ENCODE measurements at regions of chr16 and their contacts with region 1.

Region 1: DNA sequence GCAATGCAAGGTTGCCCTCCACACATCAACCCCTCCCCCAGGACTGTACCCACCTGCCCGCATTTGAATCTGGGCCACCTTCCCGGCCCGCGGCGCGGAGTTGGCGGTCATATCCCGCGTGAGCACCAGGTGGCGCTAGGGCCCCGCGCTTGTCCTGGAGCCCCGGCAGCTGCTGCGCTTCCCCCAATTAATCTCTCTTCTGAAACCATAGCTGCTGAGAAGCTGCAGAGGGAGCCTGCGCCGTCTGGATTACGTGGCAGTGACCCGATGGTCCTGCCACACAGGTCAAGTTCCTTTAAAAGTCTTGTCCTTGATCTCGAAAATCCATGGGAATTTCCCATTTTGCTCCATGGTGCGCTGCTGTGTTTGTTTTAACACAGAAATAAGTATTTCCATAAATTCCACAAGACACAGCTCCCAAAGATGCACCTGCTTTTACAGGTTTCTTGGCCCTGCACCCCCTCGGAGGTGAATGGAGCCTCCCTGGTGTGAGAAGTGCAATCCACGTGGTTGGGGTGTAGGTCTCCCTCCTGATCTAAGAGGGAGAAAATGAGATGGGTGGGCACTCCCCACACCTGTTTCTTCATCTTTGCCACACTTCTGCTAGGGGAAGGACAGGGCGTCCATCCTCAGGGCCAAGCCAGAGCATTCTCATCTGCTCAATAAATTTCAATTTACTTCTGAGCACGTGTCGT is 22.1 kb downstream of the COX4I1 start:
- DNase-seq: peak; percentile 79
- ATAC-seq: peak; percentile 83
- H3K4me3 Mint-ChIP-seq: no peak overlapping the region
- H3K27ac Mint-ChIP-seq: no peak overlapping the region
- H3K4me1 Mint-ChIP-seq: no peaks in the 10 kb centered on the region
- H3K27me3 Mint-ChIP-seq: peaks cover 27% of the 10 kb centered on the region

Region 2: GRCh38 chr16:85891033-85891772 is 69.6 kb after region 1 on chr16:
- CTCF ChIA-PET with region 1: interaction called, 11 read pairs
- DNase-seq: no peak
- ATAC-seq: no peak
- H3K4me3 Mint-ChIP-seq: no peak overlapping the region
- H3K27ac Mint-ChIP-seq: no peak overlapping the region
- H3K4me1 Mint-ChIP-seq: peaks cover 22% of the 10 kb centered on the region
- H3K27me3 Mint-ChIP-seq: peaks cover 43% of the 10 kb centered on the region

Region 3: DNA sequence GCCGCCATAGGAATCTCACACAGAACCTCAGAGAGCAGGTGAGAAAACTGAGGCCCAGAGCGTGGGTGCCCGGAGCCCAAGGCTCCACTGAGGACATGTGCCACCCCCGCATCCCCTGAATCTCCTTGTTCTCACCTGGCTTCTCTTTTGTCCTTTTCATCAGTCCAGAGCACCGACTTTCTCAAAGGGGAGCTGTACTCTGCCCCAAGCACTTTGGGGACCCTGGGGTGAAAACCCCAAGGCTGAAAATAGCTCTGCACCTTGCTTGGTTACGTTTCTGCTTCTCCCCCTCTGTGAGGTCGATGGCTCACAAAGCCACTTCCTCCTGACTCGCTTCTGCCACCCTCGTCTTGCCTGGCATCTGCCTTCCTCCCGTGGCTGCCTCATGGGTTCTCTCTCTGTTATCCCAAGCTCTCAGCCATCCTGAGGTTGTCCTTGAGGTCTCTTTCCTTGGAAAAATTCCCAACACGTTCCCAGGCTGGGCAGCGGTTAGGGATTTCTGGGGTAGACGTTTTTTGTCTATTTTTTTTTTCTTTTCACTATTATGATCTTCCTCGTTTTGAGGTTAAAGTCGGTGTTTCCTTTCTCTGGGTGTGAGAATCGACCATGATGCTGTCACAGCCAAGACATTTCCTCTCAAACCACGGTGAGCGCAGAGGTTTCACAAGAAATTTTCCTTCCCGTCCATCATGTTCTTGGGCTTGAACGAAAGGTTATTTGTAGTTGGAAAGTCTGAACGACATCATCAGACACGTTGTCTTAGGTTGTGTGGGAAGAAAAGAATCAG is 114.6 kb after region 1 on chr16:
- CTCF ChIA-PET with region 1: interaction called, 20 read pairs
- DNase-seq: peak; percentile 91
- ATAC-seq: peak; percentile 90
- H3K4me3 Mint-ChIP-seq: peak overlapping the region; percentile 57
- H3K27ac Mint-ChIP-seq: peak overlapping the region; percentile 91
- H3K4me1 Mint-ChIP-seq: peaks cover 32% of the 10 kb centered on the region
- H3K27me3 Mint-ChIP-seq: peaks cover 46% of the 10 kb centered on the region

Region 4: DNA sequence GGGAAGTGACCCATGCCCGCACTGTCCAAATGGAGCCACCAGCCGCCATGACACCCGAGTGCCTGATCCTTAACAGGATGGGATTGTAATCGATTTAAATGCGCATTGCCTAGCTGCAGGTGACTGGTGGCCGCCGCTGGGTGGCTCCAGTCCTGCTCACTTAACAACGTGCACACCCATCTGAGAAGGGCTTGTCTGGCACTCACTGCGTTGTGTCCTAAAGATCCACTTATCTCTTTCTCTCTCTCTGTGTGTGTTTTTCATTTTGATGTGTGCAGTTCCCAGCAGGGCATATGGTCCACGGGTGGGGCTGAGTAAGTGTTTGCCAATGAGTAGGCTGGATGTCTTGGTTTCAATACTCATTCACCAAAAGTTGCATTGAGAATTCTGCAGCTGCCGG is 158.0 kb after region 1 on chr16:
- CTCF ChIA-PET with region 1: interaction called, 23 read pairs
- DNase-seq: no peak
- ATAC-seq: no peak
- H3K4me3 Mint-ChIP-seq: no peak overlapping the region
- H3K27ac Mint-ChIP-seq: no peak overlapping the region
- H3K4me1 Mint-ChIP-seq: no peaks in the 10 kb centered on the region
- H3K27me3 Mint-ChIP-seq: peaks cover 18% of the 10 kb centered on the region

Region 5: DNA sequence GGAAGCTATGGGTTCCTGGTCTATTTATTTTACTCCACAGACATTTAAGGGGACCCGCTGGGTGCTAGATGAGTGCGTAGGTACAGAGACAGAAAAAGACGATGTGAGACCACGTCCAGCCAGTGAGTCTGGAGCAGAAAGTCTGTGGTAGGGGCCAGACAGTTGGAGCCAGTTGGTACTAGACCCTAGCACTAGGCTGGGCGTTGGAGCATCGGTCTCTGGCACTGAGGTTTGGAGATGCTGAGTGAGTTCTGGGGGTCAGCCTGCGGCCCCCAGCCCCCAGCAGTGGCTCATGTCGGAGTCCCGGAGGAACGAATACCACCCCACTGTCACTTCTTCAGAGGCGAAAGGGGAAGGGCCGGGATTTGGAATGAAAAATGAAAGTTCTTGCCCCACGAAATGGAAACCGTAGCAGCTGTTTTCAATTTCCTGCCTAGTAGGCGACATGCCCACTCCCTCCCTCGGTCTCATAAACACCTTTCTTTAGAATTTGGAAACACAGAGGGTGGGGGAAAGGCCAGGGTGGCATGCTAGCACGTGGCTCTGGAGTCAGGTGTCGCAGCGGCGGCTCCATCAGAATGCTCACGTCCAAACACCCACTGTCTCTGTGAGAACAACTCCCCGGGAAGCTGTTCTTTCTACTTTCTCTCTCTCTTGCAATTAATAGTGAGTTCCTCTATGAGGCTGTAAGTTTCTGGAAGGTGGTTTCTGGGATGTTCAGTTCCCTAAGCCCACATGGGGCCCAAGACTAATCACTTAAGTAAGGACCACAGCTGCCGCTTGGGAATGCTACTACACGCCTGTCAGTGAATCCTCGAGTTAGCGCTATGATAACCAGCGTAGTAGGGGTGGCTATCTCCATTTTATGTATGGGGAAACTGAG is 174.2 kb after region 1 on chr16:
- CTCF ChIA-PET with region 1: interaction called, 246 read pairs
- DNase-seq: no peak
- ATAC-seq: peak; percentile 26
- H3K4me3 Mint-ChIP-seq: no peak overlapping the region
- H3K27ac Mint-ChIP-seq: no peak overlapping the region
- H3K4me1 Mint-ChIP-seq: peaks cover 25% of the 10 kb centered on the region
- H3K27me3 Mint-ChIP-seq: peaks cover 10% of the 10 kb centered on the region

Region 6: GRCh38 chr16:86022381-86022960 is 200.9 kb after region 1 on chr16:
- CTCF ChIA-PET with region 1: interaction called, 227 read pairs
- DNase-seq: no peak
- ATAC-seq: no peak
- H3K4me3 Mint-ChIP-seq: no peak overlapping the region
- H3K27ac Mint-ChIP-seq: no peak overlapping the region
- H3K4me1 Mint-ChIP-seq: no peaks in the 10 kb centered on the region
- H3K27me3 Mint-ChIP-seq: peaks cover 26% of the 10 kb centered on the region

Measured in activated CD8-positive, alpha-beta memory T cell treated with anti-CD3 and anti-CD28 coated beads, Interleukin-2, amount 10 ng/mL, durations not matched to agents 7 days and 5 days (primary cell).